ENCODE measurements at regions of chr20 and their contacts with region 1.

Region 1: GRCh38 chr20:17873410-17874270 is 95.0 kb downstream of the SNX5 start:
- DNase-seq: peak; percentile 96
- H3K4me3 ChIP-seq: peak overlapping the region; percentile 20
- H3K27ac ChIP-seq: peak overlapping the region; percentile 93
- H3K27me3 ChIP-seq: no peaks in the 10 kb centered on the region
- CTCF ChIP-seq: no peak

Region 2: GRCh38 chr20:17248224-17248623 is 625.4 kb before region 1 on chr20:
- CTCF ChIA-PET with region 1: no interaction called
- POLR2A ChIA-PET with region 1: no interaction called
- DNase-seq: no peak
- H3K4me3 ChIP-seq: no peak overlapping the region
- H3K27ac ChIP-seq: no peak overlapping the region
- H3K27me3 ChIP-seq: no peaks in the 10 kb centered on the region
- CTCF ChIP-seq: no peak

Region 3: GRCh38 chr20:17835240-17835935 is 38.3 kb before region 1 on chr20:
- CTCF ChIA-PET with region 1: no interaction called
- POLR2A ChIA-PET with region 1: interaction called, 14 read pairs
- DNase-seq: no peak
- H3K4me3 ChIP-seq: no peak overlapping the region
- H3K27ac ChIP-seq: peak overlapping the region; percentile 95
- H3K27me3 ChIP-seq: no peaks in the 10 kb centered on the region
- CTCF ChIP-seq: no peak

Region 4: GRCh38 chr20:17843246-17844132 is 30.2 kb before region 1 on chr20:
- CTCF ChIA-PET with region 1: no interaction called
- POLR2A ChIA-PET with region 1: interaction called, 16 read pairs
- DNase-seq: peak; percentile 90
- H3K4me3 ChIP-seq: peak overlapping the region; percentile 35
- H3K27ac ChIP-seq: peak overlapping the region; percentile 97
- H3K27me3 ChIP-seq: no peaks in the 10 kb centered on the region
- CTCF ChIP-seq: no peak

Measured in AG04450 (cell line).